CD8-positive, alpha-beta memory T cell (primary cell): ENCODE measurements at regions of chr2 and their contacts with region 1.

Region 1: DNA sequence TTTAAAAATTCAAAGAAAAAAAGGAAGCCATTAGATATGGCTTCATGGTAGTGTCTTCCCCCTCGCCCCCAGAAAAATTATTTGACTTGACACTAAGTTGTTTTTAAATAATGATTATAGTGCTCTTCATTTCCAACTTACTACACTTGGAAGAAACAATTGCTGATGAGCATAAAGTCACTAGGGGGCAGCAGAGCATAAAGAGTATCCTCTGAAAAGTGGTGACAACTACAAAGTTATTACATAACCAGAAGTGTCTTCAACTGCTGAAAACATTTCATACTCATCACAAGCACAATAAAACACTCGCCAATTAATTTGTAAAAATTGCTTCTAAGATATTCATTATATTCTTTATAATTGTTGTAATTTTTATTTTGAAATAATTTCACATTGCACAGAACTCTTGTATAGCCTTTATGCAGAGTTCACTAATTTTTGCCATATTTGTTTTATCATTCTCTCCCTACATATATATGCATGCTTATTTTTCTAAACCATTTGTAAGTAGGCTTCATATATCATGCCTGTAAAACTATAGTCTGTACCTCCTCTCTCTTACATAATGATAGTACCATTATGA is 54.9 kb downstream of the EXOC6B start:
- DNase-seq: peak; percentile 14 to 64 (median 53)
- H3K4me3 ChIP-seq: no peak overlapping the region
- H3K4me3 Mint-ChIP-seq: no peak overlapping the region
- H3K27ac ChIP-seq: no peak overlapping the region
- H3K27ac Mint-ChIP-seq: no peak overlapping the region
- H3K4me1 ChIP-seq: no peaks in the 10 kb centered on the region
- H3K4me1 Mint-ChIP-seq: no peaks in the 10 kb centered on the region
- H3K27me3 ChIP-seq: no peaks in the 10 kb centered on the region
- H3K27me3 Mint-ChIP-seq: no peaks in the 10 kb centered on the region

Region 2: DNA sequence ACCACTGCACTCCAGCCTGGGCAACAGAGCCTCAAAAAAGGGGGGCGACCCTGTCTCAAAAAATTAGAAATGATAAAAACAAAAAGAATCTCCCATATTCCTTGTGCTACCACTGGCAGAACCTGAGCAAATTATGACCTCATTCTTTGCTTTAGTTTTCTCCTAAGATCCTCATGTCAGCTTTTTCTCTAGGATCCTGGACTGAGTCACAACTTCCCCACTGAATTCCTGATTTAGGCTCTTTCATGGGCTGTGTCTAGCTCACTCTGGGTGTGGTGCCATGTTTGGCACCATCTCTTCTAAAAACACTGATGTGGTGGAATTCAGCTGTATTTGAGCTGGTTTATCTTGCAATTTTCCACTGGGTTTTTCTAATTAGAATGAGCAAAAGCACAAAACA is 17.8 kb after region 1 on chr2:
- CTCF ChIA-PET with region 1: no interaction called
- POLR2A ChIA-PET with region 1: no interaction called
- DNase-seq: no peak
- H3K4me3 ChIP-seq: no peak overlapping the region
- H3K4me3 Mint-ChIP-seq: no peak overlapping the region
- H3K27ac ChIP-seq: no peak overlapping the region
- H3K27ac Mint-ChIP-seq: no peak overlapping the region
- H3K4me1 ChIP-seq: no peaks in the 10 kb centered on the region
- H3K4me1 Mint-ChIP-seq: peaks cover 0 to 6% (median 4%) of the 10 kb centered on the region in 3 donors
- H3K27me3 ChIP-seq: no peaks in the 10 kb centered on the region
- H3K27me3 Mint-ChIP-seq: no peaks in the 10 kb centered on the region

Region 3: DNA sequence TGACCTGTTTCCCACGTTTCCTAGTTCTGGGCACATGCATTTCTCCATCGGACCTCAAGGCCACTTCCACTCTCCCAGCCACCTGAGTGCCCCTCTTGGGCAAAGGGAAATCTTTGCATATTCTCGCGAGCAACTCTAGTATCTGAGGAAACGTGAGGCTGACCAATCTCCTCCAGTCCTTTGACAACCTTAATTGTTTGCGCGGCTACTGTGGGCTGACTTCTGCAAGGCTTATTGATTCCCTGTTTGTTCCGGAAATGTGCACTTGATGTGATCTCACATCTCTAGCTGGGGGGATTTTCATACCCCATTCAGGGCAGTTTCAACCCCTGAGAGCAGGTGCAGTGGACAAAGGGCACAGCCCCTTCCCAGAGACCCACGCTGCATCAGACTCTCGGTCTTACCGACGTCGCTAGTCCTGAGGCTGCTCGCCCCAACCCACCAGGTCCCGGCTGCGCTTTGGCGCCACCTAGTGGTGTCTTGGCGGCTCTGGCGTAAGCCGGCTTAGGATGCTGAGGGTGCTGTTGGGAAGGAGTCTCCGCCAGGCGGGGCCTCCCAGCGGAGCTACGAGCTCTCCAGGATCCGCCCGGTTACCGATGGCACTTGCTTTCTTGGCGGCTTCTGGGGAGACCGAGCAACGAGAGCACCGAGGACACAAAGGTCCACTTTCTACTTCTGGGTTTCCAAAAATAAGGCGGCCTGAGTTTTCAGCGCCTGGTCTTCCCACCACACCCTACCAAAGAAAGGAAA is 91.4 kb after region 1 on chr2:
- CTCF ChIA-PET with region 1: interaction called, 18 read pairs
- POLR2A ChIA-PET with region 1: no interaction called
- DNase-seq: peak; percentile 75 to 87 (median 77)
- H3K4me3 ChIP-seq: no peak overlapping the region
- H3K4me3 Mint-ChIP-seq: peak overlapping the region in 6 of 7 donors; percentile 58 to 76 (median 65)
- H3K27ac ChIP-seq: no peak overlapping the region
- H3K27ac Mint-ChIP-seq: peak overlapping the region in 1 of 8 donors; percentile 18
- H3K4me1 ChIP-seq: no peaks in the 10 kb centered on the region
- H3K4me1 Mint-ChIP-seq: peaks cover 8 to 13% (median 10%) of the 10 kb centered on the region in 3 donors
- H3K27me3 ChIP-seq: peaks cover 14% of the 10 kb centered on the region
- H3K27me3 Mint-ChIP-seq: peaks cover 40 to 71% of the 10 kb centered on the region in 2 donors